Left ventricle myocardium inferior (tissue), 1 donor: ENCODE measurements at regions of chr9 and their contacts with region 1.

Region 1: GRCh38 chr9:133726401-133727276 is 11.5 kb downstream of the SARDH start:
- DNase-seq: peak; percentile 55
- H3K4me3 ChIP-seq: no peak overlapping the region
- H3K27ac ChIP-seq: no peak overlapping the region
- H3K4me1 ChIP-seq: no peaks in the 10 kb centered on the region
- H3K27me3 ChIP-seq: peaks cover 71% of the 10 kb centered on the region
- CTCF ChIP-seq: peak; percentile 72

Region 2: GRCh38 chr9:133532937-133533668 is 193.5 kb before region 1 on chr9:
- intact Hi-C with region 1: loop called (anchors 10 kb)
- DNase-seq: peak; percentile 74
- H3K4me3 ChIP-seq: no peak overlapping the region
- H3K27ac ChIP-seq: peak overlapping the region; percentile 61
- H3K4me1 ChIP-seq: peaks cover 56% of the 10 kb centered on the region
- H3K27me3 ChIP-seq: peaks cover 40% of the 10 kb centered on the region
- CTCF ChIP-seq: peak; percentile 66